CD8-positive, alpha-beta memory T cell (primary cell): ENCODE measurements at regions of chr12 and their contacts with region 1.

Region 1: GRCh38 chr12:2877047-2877952 is at the starts of genes FOXM1 and RHNO1:
- DNase-seq: peak; percentile 83 to 90 (median 85)
- H3K4me3 ChIP-seq: peak within 1 kb of the TSS; percentile 78
- H3K4me3 Mint-ChIP-seq: peak within 1 kb of the TSS; percentile 98 to 100 (median 99)
- H3K27ac ChIP-seq: peak within 1 kb of the TSS; percentile 92
- H3K27ac Mint-ChIP-seq: peak within 1 kb of the TSS; percentile 98 to 100 (median 100)
- H3K4me1 ChIP-seq: peaks cover 27% of the 10 kb centered on the region
- H3K4me1 Mint-ChIP-seq: peaks cover 33 to 47% (median 39%) of the 10 kb centered on the region in 3 donors
- H3K27me3 ChIP-seq: no peaks in the 10 kb centered on the region
- H3K27me3 Mint-ChIP-seq: peaks cover 0 to 3% of the 10 kb centered on the region in 2 donors
- total RNA-seq, gene FOXM1: 66.2 to 67.5 TPM
- total RNA-seq, gene RHNO1: 41.9 to 45.4 TPM

Region 2: GRCh38 chr12:2890388-2891239 is 13.3 kb after region 1 on chr12 and contains the start of gene TULP3:
- CTCF ChIA-PET with region 1: interaction called, 11 read pairs
- POLR2A ChIA-PET with region 1: interaction called, 13 read pairs
- DNase-seq: peak; percentile 98 to 99 (median 98)
- H3K4me3 ChIP-seq: peak within 1 kb of the TSS; percentile 94
- H3K4me3 Mint-ChIP-seq: peak within 1 kb of the TSS; percentile 89 to 98 (median 94)
- H3K27ac ChIP-seq: peak within 1 kb of the TSS; percentile 79
- H3K27ac Mint-ChIP-seq: peak within 1 kb of the TSS; percentile 85 to 99 (median 96)
- H3K4me1 ChIP-seq: peaks cover 16% of the 10 kb centered on the region
- H3K4me1 Mint-ChIP-seq: peaks cover 23 to 36% (median 35%) of the 10 kb centered on the region in 3 donors
- H3K27me3 ChIP-seq: no peaks in the 10 kb centered on the region
- H3K27me3 Mint-ChIP-seq: peaks cover 0 to 4% of the 10 kb centered on the region in 2 donors
- total RNA-seq, gene TULP3: 9.1 to 9.3 TPM

Region 3: GRCh38 chr12:2912216-2912575 is 34.9 kb after region 1 on chr12:
- CTCF ChIA-PET with region 1: no interaction called
- POLR2A ChIA-PET with region 1: no interaction called
- DNase-seq: no peak
- H3K4me3 ChIP-seq: no peak overlapping the region
- H3K4me3 Mint-ChIP-seq: no peak overlapping the region
- H3K27ac ChIP-seq: no peak overlapping the region
- H3K27ac Mint-ChIP-seq: peak overlapping the region in 1 of 8 donors; percentile 48
- H3K4me1 ChIP-seq: no peaks in the 10 kb centered on the region
- H3K4me1 Mint-ChIP-seq: no peaks in the 10 kb centered on the region
- H3K27me3 ChIP-seq: no peaks in the 10 kb centered on the region
- H3K27me3 Mint-ChIP-seq: peaks cover 0 to 2% of the 10 kb centered on the region in 2 donors